ENCODE measurements at regions of chr7 and their contacts with region 1.

Region 1: DNA sequence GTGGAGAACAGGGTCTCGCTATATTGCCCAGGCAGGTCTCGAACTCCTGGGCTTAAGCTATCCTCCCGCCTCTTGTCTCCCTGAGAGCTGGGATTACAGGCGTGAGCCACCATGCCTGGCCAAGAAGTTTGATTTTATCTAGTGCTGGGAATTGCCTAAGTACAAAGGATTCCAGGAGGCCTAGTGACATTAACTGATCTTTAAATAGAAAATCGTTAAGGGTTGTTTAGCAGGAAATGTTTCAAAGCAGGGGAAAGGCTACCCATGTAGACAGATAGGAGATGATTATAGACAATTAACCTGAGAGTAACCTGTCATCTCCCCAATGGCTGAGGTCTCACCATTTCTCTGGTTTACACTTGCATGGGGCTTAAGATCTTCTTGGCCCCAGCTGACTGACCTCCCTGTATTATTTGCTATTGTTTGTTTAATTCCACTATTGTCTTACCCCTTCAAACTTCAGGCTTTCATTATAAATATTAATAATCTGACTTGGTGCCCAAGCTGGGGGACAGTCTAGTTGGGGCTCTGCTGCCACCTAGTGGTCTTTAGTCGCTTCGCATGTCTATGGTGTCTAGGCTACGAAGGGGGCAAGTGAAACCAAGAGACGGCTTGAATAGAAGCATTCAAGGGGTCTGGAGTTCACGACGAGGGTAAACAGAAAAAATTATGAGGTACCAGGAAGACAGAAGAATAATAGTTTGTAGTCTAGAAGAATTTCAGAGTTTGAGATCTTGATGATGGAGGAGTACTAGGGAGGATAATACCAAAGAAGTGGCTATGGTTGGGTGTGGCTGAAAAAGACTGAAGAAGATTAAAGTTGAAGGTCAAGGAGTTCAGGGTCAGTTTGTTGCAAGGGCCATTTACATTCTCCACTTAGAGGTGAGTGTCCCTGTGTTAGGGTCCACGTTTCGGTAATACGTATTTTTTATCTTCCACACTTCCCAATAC is 40.4 kb upstream of the BPGM start:
- DNase-seq: no peak
- ATAC-seq: peak; percentile 84
- H3K4me3 Mint-ChIP-seq: no peak overlapping the region
- H3K27ac Mint-ChIP-seq: no peak overlapping the region
- H3K4me1 Mint-ChIP-seq: peaks cover 2% of the 10 kb centered on the region
- H3K27me3 Mint-ChIP-seq: peaks cover 44% of the 10 kb centered on the region
- CTCF ChIP-seq: peak; percentile 78

Region 2: DNA sequence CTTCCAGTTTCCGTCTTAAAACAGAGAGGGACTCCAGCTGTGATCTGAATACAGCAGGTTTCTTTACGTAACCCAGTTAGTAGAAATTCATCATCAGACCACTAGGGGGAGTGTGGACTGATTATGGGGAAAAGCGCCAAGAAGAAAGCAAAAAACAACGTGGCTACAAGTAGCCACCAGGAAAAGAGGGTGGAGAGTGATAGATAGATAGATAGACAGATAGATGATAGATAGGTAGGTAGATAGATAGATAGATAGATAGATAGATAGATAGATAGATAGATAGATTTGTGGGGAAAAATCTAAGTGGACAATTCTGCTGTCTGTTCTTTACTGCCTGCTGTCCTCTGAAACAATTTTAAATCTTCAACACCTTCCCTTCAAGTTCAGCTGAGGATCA is 91.6 kb before region 1 on chr7:
- CTCF ChIA-PET with region 1: interaction called, 7 read pairs
- POLR2A ChIA-PET with region 1: no interaction called
- intact Hi-C with region 1: loop called (anchors 1 kb)
- DNase-seq: no peak
- ATAC-seq: peak; percentile 72
- H3K4me3 Mint-ChIP-seq: no peak overlapping the region
- H3K27ac Mint-ChIP-seq: no peak overlapping the region
- H3K4me1 Mint-ChIP-seq: peaks cover 2% of the 10 kb centered on the region
- H3K27me3 Mint-ChIP-seq: peaks cover 6% of the 10 kb centered on the region
- CTCF ChIP-seq: peak; percentile 98

Region 3: DNA sequence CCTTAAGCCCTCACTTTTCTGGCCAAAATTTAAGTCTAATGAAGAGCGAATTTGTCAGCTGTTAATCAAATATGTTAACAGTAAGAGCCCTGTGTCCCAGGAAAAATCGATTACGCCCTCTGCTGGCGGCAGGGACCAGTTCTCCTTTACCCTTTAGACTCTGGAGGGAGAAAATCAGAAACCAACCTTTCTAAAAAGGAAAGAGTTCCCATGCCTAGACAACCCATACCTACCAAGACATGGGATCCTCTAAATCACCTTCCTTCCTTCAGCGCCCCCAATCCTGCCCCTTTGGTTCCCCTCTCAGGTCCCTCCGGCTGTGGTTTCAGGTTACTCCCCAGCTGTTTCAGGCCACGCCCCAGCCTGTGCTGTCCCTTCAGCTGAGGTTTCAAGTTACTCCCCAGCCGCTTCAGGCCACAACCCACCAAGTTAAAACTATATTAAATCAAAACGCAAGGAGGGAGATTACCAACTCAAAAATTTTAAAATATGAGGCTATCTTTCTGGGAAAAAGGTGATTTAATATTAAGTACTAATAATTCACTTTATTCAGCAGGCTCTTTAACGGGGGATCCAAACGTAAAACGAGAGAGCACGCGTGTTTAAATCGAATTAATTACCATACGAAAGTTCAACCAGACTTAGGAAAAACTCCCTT is 58.7 kb before region 1 on chr7:
- CTCF ChIA-PET with region 1: no interaction called
- POLR2A ChIA-PET with region 1: no interaction called
- intact Hi-C with region 1: loop called (anchors 2 kb)
- DNase-seq: peak; percentile 42
- ATAC-seq: peak; percentile 78
- H3K4me3 Mint-ChIP-seq: peak overlapping the region; percentile 58
- H3K27ac Mint-ChIP-seq: no peak overlapping the region
- H3K4me1 Mint-ChIP-seq: peaks cover 11% of the 10 kb centered on the region
- H3K27me3 Mint-ChIP-seq: peaks cover 14% of the 10 kb centered on the region
- CTCF ChIP-seq: no peak

Region 4: DNA sequence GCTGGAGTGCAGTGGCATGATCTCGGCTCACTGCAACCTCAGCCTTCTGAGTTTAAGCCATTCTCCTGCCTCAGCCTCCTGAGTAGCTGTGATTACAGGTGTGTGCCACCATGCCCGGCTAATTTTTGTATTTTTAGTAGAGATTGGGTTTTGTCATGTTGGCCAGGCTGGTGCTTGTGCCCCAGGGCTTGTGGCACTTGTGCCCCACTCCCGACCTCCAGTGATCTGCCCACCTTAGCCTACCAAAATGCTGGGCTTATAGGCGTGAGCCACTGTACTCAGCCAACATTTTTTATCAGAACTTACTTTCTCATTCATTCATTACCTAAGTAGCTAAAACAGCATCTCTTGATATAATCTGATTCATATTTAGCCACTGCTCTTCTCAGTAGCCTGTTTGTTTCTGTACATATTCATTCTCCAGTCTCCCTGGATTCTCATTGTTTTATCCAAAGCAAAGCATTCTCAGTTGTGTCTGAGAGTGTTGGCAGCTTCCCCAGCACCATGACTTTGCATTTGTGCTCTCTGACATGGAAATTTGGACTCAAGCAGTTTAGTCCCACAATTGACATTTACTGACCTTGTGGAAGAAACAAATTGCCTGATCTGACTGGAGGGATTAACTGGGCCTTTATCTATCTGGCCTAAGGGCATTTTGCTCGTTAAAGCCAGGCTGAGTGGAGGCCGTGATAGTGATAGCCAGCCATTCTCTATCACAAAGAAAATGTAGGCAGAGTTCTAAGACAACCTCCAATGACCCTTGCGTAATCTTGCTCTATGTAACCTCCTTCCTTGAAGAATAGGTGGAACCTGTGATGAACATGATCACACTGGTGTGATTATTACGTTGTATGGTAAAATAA is 12.5 kb before region 1 on chr7:
- CTCF ChIA-PET with region 1: interaction called, 10 read pairs
- POLR2A ChIA-PET with region 1: no interaction called
- intact Hi-C with region 1: no loop called
- DNase-seq: no peak
- ATAC-seq: no peak
- H3K4me3 Mint-ChIP-seq: no peak overlapping the region
- H3K27ac Mint-ChIP-seq: no peak overlapping the region
- H3K4me1 Mint-ChIP-seq: no peaks in the 10 kb centered on the region
- H3K27me3 Mint-ChIP-seq: no peaks in the 10 kb centered on the region
- CTCF ChIP-seq: no peak

Region 5: GRCh38 chr7:134630893-134631292 is 24.6 kb after region 1 on chr7:
- CTCF ChIA-PET with region 1: no interaction called
- POLR2A ChIA-PET with region 1: no interaction called
- intact Hi-C with region 1: no loop called
- DNase-seq: no peak
- ATAC-seq: no peak
- H3K4me3 Mint-ChIP-seq: no peak overlapping the region
- H3K27ac Mint-ChIP-seq: no peak overlapping the region
- H3K4me1 Mint-ChIP-seq: peaks cover 2% of the 10 kb centered on the region
- H3K27me3 Mint-ChIP-seq: peaks cover 18% of the 10 kb centered on the region
- CTCF ChIP-seq: no peak

Measured in activated B cell treated with CpG ODN at 0.5 μM for 24 hours (primary cell).